Breast epithelium (tissue), 4 donors: ENCODE measurements at regions of chr19 and their contacts with region 1.

Region 1: GRCh38 chr19:39480337-39481228 is at the start of gene TIMM50:
- DNase-seq: peak; percentile 94 to 98
- H3K4me3 ChIP-seq: peak within 1 kb of the TSS; percentile 63 to 96 (median 92)
- H3K27ac ChIP-seq: peak within 1 kb of the TSS; percentile 86 to 88
- H3K4me1 ChIP-seq: peaks cover 4 to 8% of the 10 kb centered on the region in 2 donors
- H3K27me3 ChIP-seq: no peaks in the 10 kb centered on the region
- CTCF ChIP-seq: peak in 1 of 3 donors; percentile 11
- POLR2A ChIP-seq: peak; percentile 24
- total RNA-seq, gene TIMM50: 39.4 to 45.6 (median 41.1) TPM

Region 2: GRCh38 chr19:39506944-39507714 is 26.5 kb after region 1 on chr19:
- intact Hi-C with region 1: loop called (anchors 1 kb)
- DNase-seq: no peak
- H3K4me3 ChIP-seq: peak overlapping the region; percentile 34 to 70 (median 52)
- H3K27ac ChIP-seq: no peak overlapping the region
- H3K4me1 ChIP-seq: peaks cover 5 to 9% of the 10 kb centered on the region in 2 donors
- H3K27me3 ChIP-seq: peaks cover 2 to 59% of the 10 kb centered on the region in 2 donors
- CTCF ChIP-seq: no peak
- POLR2A ChIP-seq: no peak

Region 3: DNA sequence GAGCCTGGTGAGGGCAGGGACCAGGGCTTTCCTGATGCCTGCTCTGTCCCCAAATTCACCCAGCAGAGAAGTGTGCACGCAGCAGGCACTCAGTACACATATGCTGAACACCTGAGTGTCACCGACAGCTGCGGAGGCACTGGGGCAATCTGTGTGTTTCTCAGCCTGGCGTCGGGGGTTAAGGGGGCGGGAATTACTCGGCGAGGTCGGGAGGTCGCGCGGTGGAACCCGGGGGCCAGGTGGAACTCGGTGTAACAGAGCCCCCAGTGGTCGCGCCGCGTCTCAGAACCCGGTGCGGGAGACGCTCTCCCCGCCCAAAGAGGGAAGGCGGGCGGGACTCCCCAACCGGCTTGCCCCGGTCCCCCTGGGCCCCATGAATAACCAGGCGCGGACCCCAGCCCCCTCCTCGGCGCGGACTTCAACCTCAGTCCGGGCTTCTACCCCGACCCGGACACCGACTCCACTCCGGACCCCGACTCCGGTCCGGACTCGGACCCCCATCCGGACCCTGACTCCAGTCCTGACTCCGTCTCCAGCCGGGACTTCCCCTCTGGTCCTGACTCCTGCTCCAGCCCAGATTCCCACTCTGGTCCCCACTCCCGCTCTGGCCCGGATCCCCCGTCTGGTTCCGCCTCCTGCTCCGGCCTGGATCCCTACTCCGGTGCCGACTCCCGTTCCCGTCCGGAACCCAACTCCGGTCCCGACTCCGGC is 34.4 kb after region 1 on chr19 and contains the start of gene SELENOV:
- intact Hi-C with region 1: loop called (anchors 1 kb)
- DNase-seq: no peak
- H3K4me3 ChIP-seq: peak within 1 kb of the TSS; percentile 6 to 65 (median 49)
- H3K27ac ChIP-seq: no peak within 1 kb of the TSS
- H3K4me1 ChIP-seq: peaks cover 0 to 2% of the 10 kb centered on the region in 2 donors
- H3K27me3 ChIP-seq: peaks cover 5 to 34% of the 10 kb centered on the region in 2 donors
- CTCF ChIP-seq: no peak
- POLR2A ChIP-seq: no peak
- total RNA-seq, gene SELENOV: not detected

Region 4: DNA sequence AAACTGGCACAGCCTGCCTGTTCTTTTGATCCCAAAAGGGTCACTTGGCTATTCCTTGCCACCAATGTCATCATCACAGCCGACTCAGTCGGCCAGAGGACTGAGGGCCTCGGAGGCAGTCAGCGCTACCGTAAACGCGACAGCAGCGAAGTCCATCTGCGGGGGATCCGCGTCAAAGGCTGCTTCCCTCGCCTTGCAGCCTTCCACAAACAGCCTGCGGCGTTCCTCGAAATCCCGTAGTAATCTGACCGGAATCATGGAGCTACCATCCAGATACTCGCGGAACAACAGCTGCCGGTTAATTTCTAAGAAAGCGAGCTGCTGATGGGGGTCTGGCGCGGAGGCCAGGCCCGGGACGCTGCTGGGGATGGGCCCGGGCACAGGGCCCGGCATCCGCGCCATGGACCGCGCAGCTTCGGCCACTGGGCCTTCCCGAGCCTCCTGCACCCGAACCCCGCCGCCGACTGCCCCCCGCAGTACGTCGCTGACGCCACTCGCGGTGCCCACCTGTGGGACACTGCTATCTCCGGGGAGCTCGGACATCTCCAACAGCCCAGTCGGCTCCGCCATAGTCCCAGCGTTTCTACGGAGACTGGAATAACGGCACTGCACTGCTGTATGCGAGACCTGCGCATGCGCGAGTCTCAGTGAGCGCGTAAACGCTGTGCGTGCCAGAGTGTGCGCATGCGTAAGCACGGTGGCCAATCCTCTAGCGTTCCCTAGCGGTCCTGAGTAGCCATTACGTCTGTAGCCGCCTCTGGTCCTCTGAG is 51.8 kb after region 1 on chr19 and contains the start of gene EID2B:
- intact Hi-C with region 1: no loop called
- DNase-seq: peak; percentile 91 to 95
- H3K4me3 ChIP-seq: peak within 1 kb of the TSS; percentile 81 to 93 (median 88)
- H3K27ac ChIP-seq: peak within 1 kb of the TSS; percentile 80 to 88
- H3K4me1 ChIP-seq: no peaks in the 10 kb centered on the region
- H3K27me3 ChIP-seq: no peaks in the 10 kb centered on the region
- CTCF ChIP-seq: peak; percentile 96 to 99 (median 99)
- POLR2A ChIP-seq: no peak
- total RNA-seq, gene EID2B: 3.4 to 5.6 (median 4.3) TPM

Region 5: GRCh38 chr19:40221858-40222837 is 741.6 kb after region 1 on chr19:
- intact Hi-C with region 1: no loop called
- DNase-seq: peak; percentile 67 to 69
- H3K4me3 ChIP-seq: no peak overlapping the region
- H3K27ac ChIP-seq: no peak overlapping the region
- H3K4me1 ChIP-seq: peaks cover 0 to 7% of the 10 kb centered on the region in 2 donors
- H3K27me3 ChIP-seq: peaks cover 22 to 54% of the 10 kb centered on the region in 2 donors
- CTCF ChIP-seq: peak; percentile 85 to 90 (median 89)
- POLR2A ChIP-seq: no peak